ENCODE measurements at regions of chr2 and their contacts with region 1.

Region 1: DNA sequence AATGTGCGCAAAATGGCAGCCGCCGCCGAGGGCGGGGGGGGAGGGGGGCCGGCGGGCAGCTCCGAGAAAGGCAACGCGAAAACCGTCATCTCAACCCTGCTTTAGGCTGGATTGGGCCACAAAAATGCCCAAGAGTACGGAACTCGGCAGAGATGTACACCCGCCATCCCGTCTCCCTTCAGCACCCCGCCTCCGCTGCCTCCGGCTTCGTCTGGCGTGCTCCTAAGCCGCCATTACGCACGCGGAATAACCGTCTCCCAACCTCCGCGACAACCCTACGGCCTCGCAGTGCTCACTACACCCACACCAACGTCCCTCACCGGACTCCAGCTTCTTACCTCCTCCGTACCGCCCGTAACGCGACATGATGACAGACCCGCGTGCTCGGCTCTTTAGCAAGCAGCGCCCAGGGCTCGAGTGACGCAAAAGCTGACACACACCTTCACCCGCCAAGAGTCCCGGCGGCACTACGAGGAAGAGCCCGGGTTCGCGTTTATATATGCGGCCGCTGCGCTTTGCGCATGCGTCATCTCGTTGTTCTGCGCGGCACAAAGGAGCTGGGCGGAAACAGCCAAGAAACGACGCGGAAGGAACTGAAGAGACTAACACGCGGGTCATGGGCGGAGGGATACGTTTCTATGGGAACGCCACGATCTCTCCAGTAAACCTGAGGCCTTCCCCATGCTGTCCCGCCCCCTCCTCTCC is at the start of gene SRSF7:
- DNase-seq: peak; percentile 98
- H3K4me3 Mint-ChIP-seq: peak within 1 kb of the TSS; percentile 97
- H3K27ac Mint-ChIP-seq: peak within 1 kb of the TSS; percentile 98
- H3K4me1 Mint-ChIP-seq: peaks cover 55% of the 10 kb centered on the region
- H3K27me3 Mint-ChIP-seq: no peaks in the 10 kb centered on the region
- total RNA-seq, gene SRSF7: 243 to 249 TPM

Region 2: DNA sequence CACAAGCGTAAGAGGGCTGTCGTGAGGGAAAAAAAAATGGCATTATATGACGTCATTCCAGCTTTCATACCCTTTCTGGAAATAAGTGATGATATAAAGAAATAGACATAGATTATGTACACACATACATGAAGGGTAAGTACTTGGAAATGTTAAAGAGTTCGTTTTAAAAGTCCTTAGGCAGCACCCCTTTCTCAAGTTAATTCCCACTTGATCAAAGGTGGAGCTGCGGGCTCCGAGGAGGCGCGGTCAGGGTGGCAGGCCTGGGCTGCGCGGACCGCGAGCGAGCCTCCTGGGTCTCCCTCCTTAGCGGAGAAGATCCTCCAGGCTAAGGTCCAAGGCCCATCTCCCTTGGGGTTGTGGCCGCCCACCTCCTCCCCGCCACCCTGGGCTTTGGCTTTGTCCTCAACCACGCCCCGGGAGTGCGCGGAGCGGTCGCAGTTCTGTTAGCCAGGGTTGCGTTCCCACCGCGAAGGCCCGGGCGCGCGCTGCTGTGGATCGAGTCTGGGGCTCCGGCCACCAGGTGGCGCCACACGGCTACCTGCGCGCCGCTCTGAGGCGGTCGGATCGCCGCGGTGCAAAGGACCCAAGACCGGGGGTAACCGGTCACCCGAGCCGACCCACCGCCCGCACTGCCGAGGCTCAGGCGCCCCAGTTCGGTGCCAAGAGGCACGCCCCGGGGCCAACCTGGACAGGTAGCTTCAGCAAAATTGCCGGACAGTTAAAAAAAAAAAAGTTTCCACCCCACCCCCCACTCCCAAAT is 215.1 kb before region 1 on chr2:
- CTCF ChIA-PET with region 1: interaction called, 4 read pairs
- POLR2A ChIA-PET with region 1: interaction called, 29 read pairs
- DNase-seq: peak; percentile 81
- H3K4me3 Mint-ChIP-seq: peak overlapping the region; percentile 41
- H3K27ac Mint-ChIP-seq: no peak overlapping the region
- H3K4me1 Mint-ChIP-seq: peaks cover 10% of the 10 kb centered on the region
- H3K27me3 Mint-ChIP-seq: peaks cover 14% of the 10 kb centered on the region

Region 3: GRCh38 chr2:38590053-38590452 is 161.0 kb before region 1 on chr2:
- CTCF ChIA-PET with region 1: interaction called, 3 read pairs
- POLR2A ChIA-PET with region 1: interaction called, 364 read pairs
- DNase-seq: no peak
- H3K4me3 Mint-ChIP-seq: peak overlapping the region; percentile 36
- H3K27ac Mint-ChIP-seq: peak overlapping the region; percentile 62
- H3K4me1 Mint-ChIP-seq: peaks cover 78% of the 10 kb centered on the region
- H3K27me3 Mint-ChIP-seq: no peaks in the 10 kb centered on the region

Region 4: DNA sequence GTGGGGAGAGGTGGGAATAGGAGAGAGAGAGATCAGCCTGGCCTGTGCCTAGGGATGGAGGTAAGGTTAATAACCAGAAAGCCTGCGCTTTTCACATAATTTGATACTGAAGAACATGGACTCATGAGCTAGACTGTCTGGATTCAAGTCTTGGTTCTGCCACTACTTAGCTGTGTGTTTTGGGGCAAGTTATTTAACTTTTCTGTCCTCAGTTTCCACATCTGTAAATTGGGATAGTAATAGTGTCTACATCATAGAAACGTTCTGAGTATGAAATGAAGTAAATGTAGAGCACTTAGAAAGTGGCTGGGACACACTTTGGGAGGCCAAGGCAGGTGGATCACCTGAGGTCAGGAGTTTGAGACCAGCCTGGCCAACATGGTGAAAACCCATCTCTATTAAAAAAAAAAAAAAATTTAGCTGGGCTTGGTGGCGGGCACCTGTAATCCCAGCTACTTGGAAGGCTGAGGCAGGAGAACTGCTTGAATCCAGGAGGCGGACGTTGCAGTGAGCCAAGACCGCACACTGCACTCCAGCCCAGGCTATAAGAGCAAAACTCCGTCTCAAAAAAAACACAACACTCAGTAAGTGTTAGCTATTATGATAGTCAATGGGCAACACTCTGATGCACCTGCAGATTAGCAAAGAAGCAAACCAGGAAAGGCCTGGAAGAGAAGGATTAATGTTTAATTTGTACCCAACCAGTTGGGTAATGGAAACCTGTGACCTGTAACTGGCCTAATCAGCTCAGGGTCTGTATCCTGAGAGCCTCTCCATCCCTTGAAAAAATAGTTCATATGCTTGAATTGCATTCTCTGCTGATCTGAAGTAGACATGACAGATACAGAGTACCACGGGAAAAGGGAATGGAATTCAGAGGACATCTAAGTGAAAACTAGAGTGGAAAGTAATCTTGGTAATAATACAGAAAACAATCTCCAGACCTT is 78.3 kb before region 1 on chr2:
- CTCF ChIA-PET with region 1: interaction called, 3 read pairs
- POLR2A ChIA-PET with region 1: interaction called, 40 read pairs
- DNase-seq: no peak
- H3K4me3 Mint-ChIP-seq: no peak overlapping the region
- H3K27ac Mint-ChIP-seq: peak overlapping the region; percentile 9
- H3K4me1 Mint-ChIP-seq: peaks cover 79% of the 10 kb centered on the region
- H3K27me3 Mint-ChIP-seq: no peaks in the 10 kb centered on the region

Region 5: DNA sequence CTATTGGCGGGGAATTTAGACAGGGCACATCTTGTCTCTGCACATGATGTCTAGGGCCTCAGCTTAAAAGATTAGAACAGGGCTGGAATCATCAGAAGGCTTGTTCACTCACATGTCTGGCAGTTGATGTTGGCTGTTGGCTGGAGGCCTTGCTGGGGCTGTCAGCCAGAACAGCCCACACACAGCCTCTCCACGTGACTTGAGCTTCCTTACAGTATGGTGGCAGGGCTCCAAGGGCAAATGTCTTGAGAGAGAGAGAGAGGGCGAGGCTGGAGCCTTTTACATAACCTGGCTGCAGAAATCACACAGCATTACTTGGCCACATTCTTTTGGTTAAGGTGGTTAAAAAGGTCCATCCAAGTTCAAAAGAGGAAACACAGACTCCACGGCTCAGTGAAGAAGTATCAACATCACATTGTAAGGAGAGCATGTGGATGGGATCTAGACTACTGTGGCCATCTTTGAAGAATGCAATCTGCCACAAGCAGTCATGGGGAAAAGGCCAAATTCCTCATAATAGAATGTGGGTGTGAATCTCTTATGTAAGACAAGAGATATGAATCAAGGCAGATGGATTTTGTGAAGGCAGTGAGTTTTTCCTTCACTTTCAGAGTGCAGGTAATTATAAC is 30.3 kb before region 1 on chr2:
- CTCF ChIA-PET with region 1: no interaction called
- POLR2A ChIA-PET with region 1: interaction called, 17 read pairs
- DNase-seq: no peak
- H3K4me3 Mint-ChIP-seq: no peak overlapping the region
- H3K27ac Mint-ChIP-seq: peak overlapping the region; percentile 70
- H3K4me1 Mint-ChIP-seq: peaks cover 65% of the 10 kb centered on the region
- H3K27me3 Mint-ChIP-seq: no peaks in the 10 kb centered on the region

Region 6: GRCh38 chr2:38806015-38806732 is 55.1 kb after region 1 on chr2:
- CTCF ChIA-PET with region 1: no interaction called
- POLR2A ChIA-PET with region 1: interaction called, 11 read pairs
- DNase-seq: peak; percentile 18
- H3K4me3 Mint-ChIP-seq: no peak overlapping the region
- H3K27ac Mint-ChIP-seq: no peak overlapping the region
- H3K4me1 Mint-ChIP-seq: no peaks in the 10 kb centered on the region
- H3K27me3 Mint-ChIP-seq: no peaks in the 10 kb centered on the region